Activated naive CD4-positive, alpha-beta T cell treated with anti-CD3 and anti-CD28 coated beads, Interleukin-2, amount 10 ng/mL, durations not matched to agents 7 days and 5 days (primary cell): ENCODE measurements at regions of chr17 and their contacts with region 1.

Region 1: GRCh38 chr17:3738562-3739295 is 15.0 kb downstream of the HASPIN start:
- DNase-seq: peak; percentile 72
- H3K4me3 Mint-ChIP-seq: no peak overlapping the region
- H3K27ac Mint-ChIP-seq: peak overlapping the region; percentile 31
- H3K4me1 Mint-ChIP-seq: peaks cover 42% of the 10 kb centered on the region
- H3K27me3 Mint-ChIP-seq: peaks cover 9% of the 10 kb centered on the region

Region 2: DNA sequence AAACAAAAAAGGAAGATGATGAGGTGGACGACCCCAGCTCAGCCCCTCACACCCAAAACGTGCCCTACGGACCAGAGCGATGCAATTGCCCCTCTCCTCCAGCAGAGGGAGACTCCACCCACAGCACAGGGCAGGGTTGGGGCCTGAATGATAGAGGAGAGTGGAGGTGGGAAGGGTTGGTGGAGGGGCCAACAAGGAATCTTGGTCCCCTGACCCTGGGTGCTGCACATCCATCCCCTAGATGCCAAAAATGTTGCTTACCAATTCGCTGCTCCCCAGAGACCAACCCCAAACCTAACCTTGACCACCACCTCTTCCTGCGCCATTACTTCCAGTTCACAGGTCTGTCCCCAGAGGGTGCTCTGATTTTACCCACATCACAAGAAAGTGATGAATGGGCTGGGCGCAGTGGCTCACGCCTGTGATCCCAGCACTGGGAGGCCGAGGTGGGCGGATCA is 55.6 kb before region 1 on chr17:
- CTCF ChIA-PET with region 1: interaction called, 13 read pairs
- DNase-seq: peak; percentile 71
- H3K4me3 Mint-ChIP-seq: no peak overlapping the region
- H3K27ac Mint-ChIP-seq: no peak overlapping the region
- H3K4me1 Mint-ChIP-seq: peaks cover 27% of the 10 kb centered on the region
- H3K27me3 Mint-ChIP-seq: no peaks in the 10 kb centered on the region

Region 3: DNA sequence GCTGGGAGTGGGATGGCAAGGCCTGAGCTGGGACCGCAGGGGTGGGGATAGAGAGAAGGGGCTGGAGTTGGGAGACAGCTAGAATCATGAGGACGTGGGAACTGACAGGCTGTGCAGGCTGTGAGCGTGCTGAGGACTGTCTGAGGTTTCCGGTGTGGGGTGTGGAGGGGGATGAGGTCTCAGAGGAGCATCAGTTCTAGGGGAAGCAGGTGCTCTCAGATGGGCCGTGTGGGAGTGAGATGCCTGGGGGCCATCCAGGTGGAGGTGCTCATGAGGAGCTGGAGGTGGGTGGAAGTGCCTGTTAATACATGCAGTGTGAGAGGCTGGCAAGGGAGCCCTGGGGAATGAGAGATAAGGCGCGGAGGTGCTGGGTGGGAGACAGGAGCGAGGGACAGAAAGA is 12.2 kb after region 1 on chr17:
- CTCF ChIA-PET with region 1: interaction called, 26 read pairs
- DNase-seq: peak; percentile 73
- H3K4me3 Mint-ChIP-seq: peak overlapping the region; percentile 27
- H3K27ac Mint-ChIP-seq: peak overlapping the region; percentile 2
- H3K4me1 Mint-ChIP-seq: peaks cover 49% of the 10 kb centered on the region
- H3K27me3 Mint-ChIP-seq: peaks cover 28% of the 10 kb centered on the region

Region 4: GRCh38 chr17:3796110-3796821 is 57.5 kb after region 1 on chr17:
- CTCF ChIA-PET with region 1: interaction called, 23 read pairs
- DNase-seq: peak; percentile 69
- H3K4me3 Mint-ChIP-seq: no peak overlapping the region
- H3K27ac Mint-ChIP-seq: no peak overlapping the region
- H3K4me1 Mint-ChIP-seq: peaks cover 29% of the 10 kb centered on the region
- H3K27me3 Mint-ChIP-seq: peaks cover 4% of the 10 kb centered on the region

Region 5: DNA sequence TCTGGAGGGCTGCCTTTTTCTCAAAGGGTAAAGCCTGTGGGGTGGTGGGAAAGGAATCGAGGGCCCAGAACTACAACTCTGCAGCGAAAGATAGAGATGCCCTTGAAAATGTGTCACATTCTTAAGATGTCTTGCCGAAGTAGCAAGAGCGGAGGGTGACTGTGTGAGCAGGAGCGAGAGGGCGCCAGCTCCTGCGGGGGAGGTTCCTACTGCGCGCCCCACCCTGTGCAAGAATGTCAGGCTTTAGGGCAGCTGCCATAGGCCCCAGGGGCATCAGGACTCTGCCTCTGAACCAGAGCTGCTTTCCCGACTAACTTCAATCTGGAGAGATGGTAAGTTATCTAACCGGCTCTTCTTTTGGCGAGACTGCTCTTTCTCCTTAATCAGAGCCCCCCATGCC is 74.0 kb after region 1 on chr17:
- CTCF ChIA-PET with region 1: interaction called, 46 read pairs
- DNase-seq: peak; percentile 8
- H3K4me3 Mint-ChIP-seq: no peak overlapping the region
- H3K27ac Mint-ChIP-seq: no peak overlapping the region
- H3K4me1 Mint-ChIP-seq: no peaks in the 10 kb centered on the region
- H3K27me3 Mint-ChIP-seq: no peaks in the 10 kb centered on the region

Region 6: DNA sequence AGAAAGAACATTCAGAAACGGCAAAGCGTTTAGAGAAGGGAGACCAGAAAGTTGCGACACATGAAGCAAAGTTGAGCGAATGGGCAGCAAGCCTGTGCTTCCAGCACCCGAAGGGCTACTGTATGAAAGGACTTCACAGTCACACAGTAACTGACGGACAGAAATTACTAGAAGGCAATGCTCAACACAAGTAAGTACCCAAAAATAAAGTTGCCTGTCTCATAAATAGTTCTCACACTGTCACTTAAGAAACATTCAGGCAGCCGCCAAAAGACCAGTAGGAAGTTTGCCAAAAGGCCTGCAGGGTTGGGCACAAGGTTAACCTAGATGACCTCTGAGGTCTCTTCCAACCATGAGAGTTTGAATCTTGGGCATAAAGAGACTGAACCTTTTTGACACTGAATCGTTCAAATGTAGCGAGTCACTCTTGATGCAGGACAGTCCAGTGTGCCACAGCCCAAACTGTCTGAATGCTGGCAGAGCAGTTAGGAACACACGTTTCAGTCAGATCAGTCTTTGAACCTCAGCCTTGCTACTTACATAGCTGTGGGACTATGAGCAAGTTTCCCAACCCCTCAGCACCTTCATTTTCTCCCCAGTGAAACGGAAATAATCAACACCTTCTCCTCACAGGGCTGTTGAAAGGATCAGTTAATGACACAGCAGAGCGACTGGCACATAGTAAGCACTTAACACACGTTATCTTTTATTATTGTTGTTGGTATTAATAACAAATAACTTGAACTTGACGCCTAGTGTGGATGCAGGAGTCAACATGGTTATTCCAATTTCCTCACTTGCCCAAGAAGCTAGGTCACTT is 96.9 kb after region 1 on chr17:
- CTCF ChIA-PET with region 1: interaction called, 374 read pairs
- DNase-seq: peak; percentile 7
- H3K4me3 Mint-ChIP-seq: no peak overlapping the region
- H3K27ac Mint-ChIP-seq: no peak overlapping the region
- H3K4me1 Mint-ChIP-seq: peaks cover 2% of the 10 kb centered on the region
- H3K27me3 Mint-ChIP-seq: no peaks in the 10 kb centered on the region

Region 7: GRCh38 chr17:3913531-3914311 is 175.0 kb after region 1 on chr17:
- CTCF ChIA-PET with region 1: interaction called, 14 read pairs
- DNase-seq: peak; percentile 87
- H3K4me3 Mint-ChIP-seq: no peak overlapping the region
- H3K27ac Mint-ChIP-seq: no peak overlapping the region
- H3K4me1 Mint-ChIP-seq: peaks cover 62% of the 10 kb centered on the region
- H3K27me3 Mint-ChIP-seq: peaks cover 25% of the 10 kb centered on the region